ENCODE measurements at regions of chr15 and their contacts with region 1.

Region 1: GRCh38 chr15:34209421-34210282 is at the start of gene KATNBL1:
- DNase-seq: peak; percentile 84 to 99
- H3K4me3 ChIP-seq: peak within 1 kb of the TSS; percentile 45 to 93 (median 73)
- H3K27ac ChIP-seq: peak within 1 kb of the TSS; percentile 84; the same call in 1 of the 2 replicates
- H3K4me1 ChIP-seq: peaks cover 5 to 16% (median 15%) of the 10 kb centered on the region in 4 experiments; a peak in 5 of 7 replicates
- H3K27me3 ChIP-seq: no peaks in the 10 kb centered on the region
- CTCF ChIP-seq: peak; percentile 87 to 94 (median 93)
- EP300 ChIP-seq: peak in 1 of 2 experiments; percentile 4; a peak in 1 of 3 replicates
- POLR2A ChIP-seq: peak; percentile 76 to 91
- RAD21 ChIP-seq: peak; percentile 85 to 91
- total RNA-seq, gene KATNBL1: 50.3 and 51.4 TPM in 2 replicates

Region 2: DNA sequence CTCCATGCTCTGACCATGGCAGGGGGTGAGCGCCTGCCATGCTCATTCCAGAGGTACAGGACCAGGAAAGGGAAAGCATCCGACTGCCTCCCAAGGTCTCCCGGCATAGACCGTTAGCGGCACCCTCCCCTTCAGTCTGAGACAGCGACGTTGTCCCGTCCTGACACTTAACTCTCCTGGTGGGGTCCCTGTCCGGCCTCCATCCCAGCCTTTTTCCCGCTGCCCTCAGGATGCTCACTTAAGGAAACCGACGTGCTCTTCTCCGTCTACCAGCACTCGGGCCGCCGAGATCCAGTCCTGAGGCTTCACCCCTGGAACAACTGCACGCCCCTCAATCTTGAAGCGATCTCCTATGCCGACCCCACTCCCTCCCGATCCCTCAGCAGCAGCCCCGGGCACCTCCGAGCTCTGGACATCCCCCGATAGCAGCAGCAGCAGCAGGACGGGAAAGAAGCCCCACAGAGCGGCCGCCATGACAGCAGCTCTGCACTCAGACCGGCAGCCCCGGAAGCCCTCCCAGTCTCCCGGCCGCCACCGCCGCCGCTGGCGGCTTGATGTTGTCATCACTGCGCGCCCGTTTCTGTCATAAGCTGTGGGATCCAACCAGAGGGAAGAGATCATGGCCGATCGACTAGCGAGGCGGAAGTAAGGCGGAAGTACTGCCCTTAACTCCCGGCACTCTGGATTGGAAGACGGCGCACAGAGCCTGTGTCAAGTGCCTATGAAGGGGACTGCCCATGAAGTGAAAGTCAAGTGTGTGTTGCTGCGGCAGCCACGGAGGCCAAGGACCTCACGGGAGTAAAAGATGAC is 108.1 kb before region 1 on chr15 and contains the starts of genes EMC7 and PGBD4:
- CTCF ChIA-PET with region 1: interaction called, 4 read pairs
- POLR2A ChIA-PET with region 1: interaction called, 10 read pairs
- DNase-seq: peak; percentile 93 to 99
- H3K4me3 ChIP-seq: peak within 1 kb of the TSS; percentile 84 to 100 (median 98)
- H3K27ac ChIP-seq: peak within 1 kb of the TSS; percentile 83
- H3K4me1 ChIP-seq: peaks cover 0 to 4% (median 0%) of the 10 kb centered on the region in 4 experiments; a peak in 2 of 7 replicates
- H3K27me3 ChIP-seq: no peaks in the 10 kb centered on the region
- CTCF ChIP-seq: no peak
- EP300 ChIP-seq: no peak
- POLR2A ChIP-seq: peak; percentile 36 to 90
- RAD21 ChIP-seq: no peak; a peak in 1 of 4 replicates
- total RNA-seq, gene EMC7: 39.0 TPM in 2 replicates
- total RNA-seq, gene PGBD4: 0.76 and 0.99 TPM in 2 replicates